Activated T-helper 1 cell treated with anti-CD3 and anti-CD28 coated beads, Interleukin-12 subunit alpha, Interleukin-12 subunit beta, Interleukin-2, Interleukin-4 antibody, amounts not matched to agents 30 ng/mL and 10 ng/mL and 1 ng/mL, durations not matched to agents 14 hours and 24 hours and 36 hours (primary cell): ENCODE measurements at regions of chr14 and their contacts with region 1.

Region 1: GRCh38 chr14:105448706-105449111 is 25.9 kb upstream of the CRIP2 start:
- DNase-seq: peak; percentile 42
- H3K4me3 Mint-ChIP-seq: no peak overlapping the region
- H3K27ac Mint-ChIP-seq: no peak overlapping the region
- H3K4me1 Mint-ChIP-seq: no peaks in the 10 kb centered on the region
- H3K27me3 Mint-ChIP-seq: no peaks in the 10 kb centered on the region

Region 2: GRCh38 chr14:105369653-105370040 is 79.1 kb before region 1 on chr14:
- intact Hi-C with region 1: loop called (anchors 1 kb)
- DNase-seq: no peak
- H3K4me3 Mint-ChIP-seq: no peak overlapping the region
- H3K27ac Mint-ChIP-seq: no peak overlapping the region
- H3K4me1 Mint-ChIP-seq: peaks cover 5% of the 10 kb centered on the region
- H3K27me3 Mint-ChIP-seq: no peaks in the 10 kb centered on the region